ENCODE measurements at regions of chr7 and their contacts with region 1.

Region 1: GRCh38 chr7:94395141-94396036 is 694 bp downstream of the COL1A2 start:
- DNase-seq: peak; percentile 46
- H3K4me3 Mint-ChIP-seq: peak overlapping the region; percentile 86
- H3K27ac Mint-ChIP-seq: peak overlapping the region; percentile 83
- H3K4me1 Mint-ChIP-seq: peaks cover 35% of the 10 kb centered on the region
- H3K27me3 Mint-ChIP-seq: no peaks in the 10 kb centered on the region

Region 2: DNA sequence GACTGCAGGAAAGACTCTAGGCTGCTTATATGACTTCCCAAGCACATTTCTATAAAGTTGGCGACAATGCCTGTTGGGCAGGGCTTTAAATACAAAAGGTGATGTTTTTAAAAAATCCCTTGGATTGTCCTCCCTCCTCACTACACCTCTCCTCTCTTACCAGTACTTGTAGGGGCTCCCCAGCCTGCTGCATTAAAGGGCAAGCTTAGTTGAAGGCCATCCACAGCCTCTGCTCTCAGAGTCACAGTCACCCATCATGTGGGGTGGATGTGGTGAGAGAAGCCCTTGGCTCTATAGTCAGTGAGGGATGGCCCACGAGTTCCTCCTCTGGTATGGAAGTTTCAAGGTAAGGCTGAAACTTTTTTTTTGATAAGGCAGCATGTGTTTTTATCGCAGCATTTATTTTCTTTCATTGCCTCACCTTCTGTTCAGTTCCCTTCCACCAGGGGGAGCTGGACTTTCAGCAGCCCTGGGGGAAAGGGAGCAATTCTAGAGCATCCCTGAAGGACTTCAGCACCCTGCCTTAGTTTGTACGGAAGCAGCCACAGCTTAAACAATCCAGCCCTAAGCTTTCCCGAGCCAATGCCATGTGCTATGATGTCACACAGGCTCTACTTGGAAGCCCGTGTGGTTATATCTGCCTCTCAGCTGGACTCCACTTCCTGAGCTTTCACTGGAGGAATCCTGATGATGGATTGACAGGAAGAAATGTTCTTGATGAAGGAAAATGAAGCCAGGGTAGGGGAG is 952.7 kb before region 1 on chr7:
- intact Hi-C with region 1: loop called (anchors 2 kb)
- DNase-seq: peak; percentile 1
- H3K4me3 Mint-ChIP-seq: no peak overlapping the region
- H3K27ac Mint-ChIP-seq: no peak overlapping the region
- H3K4me1 Mint-ChIP-seq: no peaks in the 10 kb centered on the region
- H3K27me3 Mint-ChIP-seq: peaks cover 2% of the 10 kb centered on the region

Region 3: DNA sequence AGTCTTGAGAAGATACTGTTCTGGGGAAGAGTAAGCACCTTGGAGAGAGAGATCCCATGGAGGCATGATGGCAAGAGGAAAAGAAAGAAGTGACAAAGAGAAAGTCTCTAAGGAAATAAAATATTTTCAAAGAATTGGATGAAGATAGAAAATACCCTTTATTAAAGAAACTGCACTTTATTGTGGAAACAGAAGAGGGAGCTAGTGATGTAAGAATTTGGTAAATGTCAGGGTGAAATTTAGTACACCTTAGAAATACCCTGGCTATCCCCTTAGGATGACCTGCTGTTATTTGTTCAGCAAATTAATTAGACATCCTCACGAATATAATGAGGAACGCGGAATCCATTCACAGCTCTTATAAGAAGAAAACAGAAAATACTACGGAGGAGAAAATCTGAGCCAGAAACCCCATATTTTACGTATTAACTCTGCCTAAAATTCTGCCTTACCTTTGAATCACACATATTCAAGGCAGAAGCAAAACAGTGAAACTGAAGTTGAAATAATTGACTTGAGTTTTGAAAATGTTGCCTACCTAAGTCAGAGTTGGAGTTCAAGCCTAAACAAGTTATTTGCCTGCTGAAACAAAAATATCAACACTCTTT is 595.5 kb before region 1 on chr7:
- intact Hi-C with region 1: loop called (anchors 1 kb)
- DNase-seq: no peak
- H3K4me3 Mint-ChIP-seq: no peak overlapping the region
- H3K27ac Mint-ChIP-seq: no peak overlapping the region
- H3K4me1 Mint-ChIP-seq: no peaks in the 10 kb centered on the region
- H3K27me3 Mint-ChIP-seq: peaks cover 2% of the 10 kb centered on the region

Region 4: GRCh38 chr7:94004024-94004951 is 391.1 kb before region 1 on chr7 and contains the start of gene BET1:
- intact Hi-C with region 1: loop called (anchors 1 kb)
- DNase-seq: peak; percentile 88
- H3K4me3 Mint-ChIP-seq: peak within 1 kb of the TSS; percentile 97
- H3K27ac Mint-ChIP-seq: peak within 1 kb of the TSS; percentile 97
- H3K4me1 Mint-ChIP-seq: peaks cover 35% of the 10 kb centered on the region
- H3K27me3 Mint-ChIP-seq: peaks cover 4% of the 10 kb centered on the region
- total RNA-seq, gene BET1: 21.4 and 21.6 TPM in 2 replicates

Region 5: GRCh38 chr7:94170836-94171235 is 224.6 kb before region 1 on chr7:
- intact Hi-C with region 1: loop called (anchors 10 kb)
- DNase-seq: no peak
- H3K4me3 Mint-ChIP-seq: no peak overlapping the region
- H3K27ac Mint-ChIP-seq: no peak overlapping the region
- H3K4me1 Mint-ChIP-seq: peaks cover 6% of the 10 kb centered on the region
- H3K27me3 Mint-ChIP-seq: peaks cover 2% of the 10 kb centered on the region

Region 6: DNA sequence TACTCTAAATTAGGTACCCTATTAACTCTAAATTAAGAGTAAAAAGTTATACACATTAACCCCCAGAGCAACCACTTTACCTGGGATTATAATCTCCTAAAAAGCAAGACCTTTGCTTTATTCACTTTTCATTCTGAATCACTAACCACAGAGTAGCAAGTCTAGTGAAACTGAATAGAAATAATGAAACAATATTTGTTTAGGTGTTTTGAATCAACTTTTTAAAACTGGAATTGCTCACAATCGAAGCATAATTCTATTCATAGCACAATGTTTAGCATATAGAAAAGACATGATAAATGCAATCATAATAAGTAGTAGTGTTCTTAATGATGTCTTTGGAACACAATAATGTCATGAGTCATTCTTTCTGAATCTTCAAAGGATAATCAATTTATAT is 77.2 kb after region 1 on chr7:
- intact Hi-C with region 1: no loop called
- DNase-seq: no peak
- H3K4me3 Mint-ChIP-seq: no peak overlapping the region
- H3K27ac Mint-ChIP-seq: no peak overlapping the region
- H3K4me1 Mint-ChIP-seq: no peaks in the 10 kb centered on the region
- H3K27me3 Mint-ChIP-seq: peaks cover 20% of the 10 kb centered on the region

Region 7: DNA sequence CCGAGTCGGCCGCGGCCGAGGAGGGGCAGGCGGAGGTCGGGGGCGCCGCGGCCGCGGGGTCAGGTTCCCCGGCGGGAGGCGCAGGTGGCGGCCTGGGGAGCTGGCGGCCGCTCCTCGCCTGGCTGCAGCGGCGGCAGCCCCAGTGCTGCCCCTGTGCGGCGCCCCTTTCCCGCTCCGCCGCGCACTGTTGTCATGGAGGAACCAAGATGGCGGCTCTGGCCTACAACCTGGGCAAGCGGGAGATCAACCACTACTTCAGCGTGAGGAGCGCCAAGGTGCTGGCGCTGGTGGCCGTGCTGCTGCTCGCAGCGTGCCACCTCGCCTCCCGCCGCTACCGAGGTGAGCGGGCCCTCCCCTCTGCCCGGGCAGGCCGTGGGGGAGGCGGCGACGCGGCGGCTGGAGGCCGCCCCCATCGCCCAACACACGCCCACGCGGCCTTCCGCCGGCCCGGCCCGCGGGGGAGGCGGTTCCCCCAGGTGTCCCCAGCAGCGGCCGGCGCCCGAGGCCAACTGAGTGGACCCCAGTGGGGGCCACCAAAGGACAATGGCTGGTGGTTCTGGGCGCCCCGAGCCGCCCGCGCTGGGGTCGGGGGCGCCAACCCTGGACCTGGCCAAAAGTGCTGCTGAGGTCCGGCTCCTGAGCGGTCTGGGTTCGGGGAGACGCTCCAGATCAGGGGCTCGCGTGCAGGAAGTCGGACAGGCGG is 114.6 kb after region 1 on chr7:
- intact Hi-C with region 1: loop called (anchors 5 kb)
- DNase-seq: peak; percentile 60
- H3K4me3 Mint-ChIP-seq: peak overlapping the region; percentile 86
- H3K27ac Mint-ChIP-seq: peak overlapping the region; percentile 88
- H3K4me1 Mint-ChIP-seq: peaks cover 30% of the 10 kb centered on the region
- H3K27me3 Mint-ChIP-seq: no peaks in the 10 kb centered on the region

Region 8: DNA sequence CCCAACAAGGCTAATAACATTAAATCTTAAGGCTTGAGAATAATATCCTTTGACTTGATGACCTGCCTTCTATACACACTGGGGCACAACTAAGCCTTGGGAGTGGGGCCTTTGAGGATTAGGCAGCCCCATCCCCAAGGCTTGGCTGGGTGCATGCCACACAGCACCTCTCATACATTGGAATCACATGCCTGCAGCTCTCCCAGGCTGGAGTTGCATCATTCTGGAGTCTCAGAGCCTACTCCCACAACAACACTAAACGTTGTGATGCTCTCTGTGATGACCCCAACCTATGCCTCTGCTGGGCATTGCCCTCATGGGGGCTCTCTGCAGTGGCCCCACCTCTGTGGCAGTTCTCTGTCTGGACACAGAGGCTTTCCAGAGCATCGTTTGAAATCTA is 292.4 kb after region 1 on chr7:
- intact Hi-C with region 1: no loop called
- DNase-seq: no peak
- H3K4me3 Mint-ChIP-seq: no peak overlapping the region
- H3K27ac Mint-ChIP-seq: no peak overlapping the region
- H3K4me1 Mint-ChIP-seq: no peaks in the 10 kb centered on the region
- H3K27me3 Mint-ChIP-seq: no peaks in the 10 kb centered on the region

Region 9: DNA sequence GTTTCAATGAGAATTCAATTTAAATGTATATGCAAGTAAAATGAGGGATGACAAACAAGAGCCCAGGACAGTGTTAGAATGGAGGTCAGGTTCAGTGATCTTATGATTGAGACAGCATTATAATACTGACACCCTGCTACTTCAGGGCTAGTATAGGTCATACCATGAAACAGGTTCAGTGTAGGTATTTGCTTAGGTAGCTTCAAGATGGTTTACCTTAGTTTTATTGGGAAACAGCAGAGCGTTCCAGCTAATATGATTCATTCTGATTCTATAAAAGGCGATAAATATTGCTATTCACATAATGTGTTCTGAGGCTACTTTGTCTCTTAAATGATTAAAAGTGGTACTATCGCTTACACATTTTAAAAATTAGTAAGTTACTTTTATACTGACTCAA is 715.3 kb after region 1 on chr7:
- intact Hi-C with region 1: no loop called
- DNase-seq: no peak
- H3K4me3 Mint-ChIP-seq: no peak overlapping the region
- H3K27ac Mint-ChIP-seq: no peak overlapping the region
- H3K4me1 Mint-ChIP-seq: no peaks in the 10 kb centered on the region
- H3K27me3 Mint-ChIP-seq: no peaks in the 10 kb centered on the region

Measured in activated T-helper 1 cell treated with anti-CD3 and anti-CD28 coated beads, Interleukin-12 subunit alpha, Interleukin-12 subunit beta, Interleukin-2, Interleukin-4 antibody, amounts not matched to agents 30 ng/mL and 10 ng/mL and 1 ng/mL, durations not matched to agents 14 hours and 24 hours and 36 hours (primary cell).